ENCODE measurements at regions of chr12 and their contacts with region 1.

Region 1: GRCh38 chr12:124480469-124481256 is 86.7 kb downstream of the NCOR2 start:
- DNase-seq: peak; percentile 84
- ATAC-seq: peak; percentile 85
- H3K4me3 ChIP-seq: peak overlapping the region; percentile 51
- H3K27ac ChIP-seq: peak overlapping the region; percentile 86
- H3K4me1 ChIP-seq: peaks cover 66% of the 10 kb centered on the region
- H3K27me3 ChIP-seq: no peaks in the 10 kb centered on the region
- CTCF ChIP-seq: no peak
- EP300 ChIP-seq: peak in 1 of 2 experiments; percentile 50; a peak in 1 of 4 replicates
- POLR2A ChIP-seq: no peak; the same call in none of the 2 replicates
- RAD21 ChIP-seq: peak; percentile 16; the same call in 1 of the 2 replicates

Region 2: GRCh38 chr12:124422570-124423523 is 57.8 kb before region 1 on chr12:
- CTCF ChIA-PET with region 1: no interaction called
- POLR2A ChIA-PET with region 1: no interaction called
- RAD21 ChIA-PET with region 1: no interaction called
- SMC1A ChIA-PET with region 1: no interaction called
- in situ Hi-C with region 1: no loop called
- intact Hi-C with region 1: no loop called
- DNase-seq: no peak
- ATAC-seq: no peak
- H3K4me3 ChIP-seq: no peak overlapping the region
- H3K27ac ChIP-seq: no peak overlapping the region
- H3K4me1 ChIP-seq: no peaks in the 10 kb centered on the region
- H3K27me3 ChIP-seq: no peaks in the 10 kb centered on the region
- CTCF ChIP-seq: no peak
- EP300 ChIP-seq: no peak
- POLR2A ChIP-seq: peak; percentile 34; the same call in 1 of the 2 replicates
- RAD21 ChIP-seq: no peak

Region 3: DNA sequence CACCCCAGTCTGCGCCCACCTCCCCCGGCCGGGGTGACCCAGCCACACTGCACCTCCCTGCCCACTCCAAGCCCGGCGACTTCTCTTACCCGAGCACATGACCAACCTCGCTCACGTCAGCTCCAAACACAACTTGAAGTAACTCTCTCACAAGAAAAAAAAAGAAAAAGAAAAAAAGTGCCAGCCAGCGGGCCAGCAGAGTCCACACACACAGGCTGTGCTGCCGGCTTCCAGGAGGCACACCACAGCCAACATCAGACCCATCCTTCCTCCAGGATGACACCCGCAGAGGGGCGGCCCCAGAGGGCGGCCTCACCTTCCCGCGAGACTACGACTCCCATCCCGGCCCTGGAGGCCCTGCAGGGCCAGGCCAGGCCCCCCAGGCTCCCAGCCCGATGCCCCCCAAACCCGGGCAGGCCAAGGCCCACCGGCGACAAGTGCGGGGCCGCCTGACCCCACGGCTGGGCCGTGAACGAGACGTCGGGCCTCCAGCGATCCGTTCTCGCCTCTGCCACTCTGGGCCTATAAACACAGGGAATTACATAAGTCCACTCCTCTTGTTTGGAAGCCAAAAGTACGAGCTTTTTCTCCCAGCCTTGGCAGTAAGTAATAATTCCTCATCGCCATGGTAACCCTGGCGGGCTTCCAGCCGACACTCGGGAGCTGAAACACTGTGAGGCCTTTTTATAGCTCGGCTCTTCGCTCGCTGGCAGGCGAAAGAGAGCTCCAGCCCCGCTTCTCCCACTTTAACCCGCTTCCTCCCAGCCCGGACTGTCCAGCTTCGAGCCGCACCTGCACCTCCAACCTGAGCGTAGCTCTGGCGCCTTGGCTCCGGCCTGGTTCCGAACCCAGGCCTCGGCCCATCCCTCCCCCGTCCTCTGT is 37.6 kb after region 1 on chr12:
- CTCF ChIA-PET with region 1: no interaction called
- POLR2A ChIA-PET with region 1: no interaction called
- RAD21 ChIA-PET with region 1: no interaction called
- SMC1A ChIA-PET with region 1: no interaction called
- in situ Hi-C with region 1: no loop called
- intact Hi-C with region 1: no loop called
- DNase-seq: no peak
- ATAC-seq: no peak
- H3K4me3 ChIP-seq: no peak overlapping the region
- H3K27ac ChIP-seq: no peak overlapping the region
- H3K4me1 ChIP-seq: peaks cover 3% of the 10 kb centered on the region; the same call in 1 of the 2 replicates
- H3K27me3 ChIP-seq: no peaks in the 10 kb centered on the region
- CTCF ChIP-seq: no peak
- EP300 ChIP-seq: no peak
- POLR2A ChIP-seq: no peak
- RAD21 ChIP-seq: no peak

Region 4: GRCh38 chr12:124713436-124714082 is 232.9 kb after region 1 on chr12:
- CTCF ChIA-PET with region 1: no interaction called
- POLR2A ChIA-PET with region 1: no interaction called
- RAD21 ChIA-PET with region 1: no interaction called
- SMC1A ChIA-PET with region 1: no interaction called
- in situ Hi-C with region 1: no loop called
- intact Hi-C with region 1: loop called (anchors 1 kb)
- DNase-seq: peak; percentile 93
- ATAC-seq: peak; percentile 91
- H3K4me3 ChIP-seq: peak overlapping the region; percentile 32; the same call in 1 of the 2 replicates
- H3K27ac ChIP-seq: peak overlapping the region; percentile 79
- H3K4me1 ChIP-seq: peaks cover 17% of the 10 kb centered on the region
- H3K27me3 ChIP-seq: no peaks in the 10 kb centered on the region
- CTCF ChIP-seq: no peak
- EP300 ChIP-seq: peak; percentile 94 to 96
- POLR2A ChIP-seq: no peak
- RAD21 ChIP-seq: peak; percentile 29; the same call in 1 of the 2 replicates

Measured in GM12878 (cell line).